Right ventricle myocardium inferior (tissue), 1 donor: ENCODE measurements at regions of chr2 and their contacts with region 1.

Region 1: GRCh38 chr2:178807227-178808008 is at the start of gene TTN:
- DNase-seq: no peak
- ATAC-seq: peak; percentile 93
- total RNA-seq, gene TTN: 3,032 TPM

Region 2: GRCh38 chr2:178731300-178731699 is 76.1 kb before region 1 on chr2:
- intact Hi-C with region 1: no loop called
- DNase-seq: no peak
- ATAC-seq: no peak

Region 3: DNA sequence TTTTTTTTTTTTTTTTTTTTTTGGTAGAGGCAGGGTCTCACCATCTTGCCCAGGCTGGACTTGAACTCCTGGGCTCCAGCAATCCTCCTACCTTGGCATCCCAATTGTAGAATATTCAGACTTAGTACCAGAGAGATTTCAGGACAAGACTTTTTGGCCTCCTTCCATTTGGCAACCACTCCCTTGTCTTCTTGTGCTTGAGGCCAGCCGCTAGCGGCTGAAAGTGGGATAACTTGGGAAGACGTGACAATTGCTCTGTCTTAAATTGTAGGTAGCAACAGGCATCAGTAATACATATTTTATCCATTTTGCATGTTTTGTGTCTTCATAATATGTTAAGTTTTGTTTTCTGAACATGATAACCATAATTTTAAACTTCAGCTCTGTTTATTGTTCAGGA is 53.1 kb after region 1 on chr2:
- intact Hi-C with region 1: loop called (anchors 2 kb)
- DNase-seq: no peak
- ATAC-seq: peak; percentile 42